Gastrocnemius medialis (tissue), 4 donors: ENCODE measurements at regions of chr1 and their contacts with region 1.

Region 1: DNA sequence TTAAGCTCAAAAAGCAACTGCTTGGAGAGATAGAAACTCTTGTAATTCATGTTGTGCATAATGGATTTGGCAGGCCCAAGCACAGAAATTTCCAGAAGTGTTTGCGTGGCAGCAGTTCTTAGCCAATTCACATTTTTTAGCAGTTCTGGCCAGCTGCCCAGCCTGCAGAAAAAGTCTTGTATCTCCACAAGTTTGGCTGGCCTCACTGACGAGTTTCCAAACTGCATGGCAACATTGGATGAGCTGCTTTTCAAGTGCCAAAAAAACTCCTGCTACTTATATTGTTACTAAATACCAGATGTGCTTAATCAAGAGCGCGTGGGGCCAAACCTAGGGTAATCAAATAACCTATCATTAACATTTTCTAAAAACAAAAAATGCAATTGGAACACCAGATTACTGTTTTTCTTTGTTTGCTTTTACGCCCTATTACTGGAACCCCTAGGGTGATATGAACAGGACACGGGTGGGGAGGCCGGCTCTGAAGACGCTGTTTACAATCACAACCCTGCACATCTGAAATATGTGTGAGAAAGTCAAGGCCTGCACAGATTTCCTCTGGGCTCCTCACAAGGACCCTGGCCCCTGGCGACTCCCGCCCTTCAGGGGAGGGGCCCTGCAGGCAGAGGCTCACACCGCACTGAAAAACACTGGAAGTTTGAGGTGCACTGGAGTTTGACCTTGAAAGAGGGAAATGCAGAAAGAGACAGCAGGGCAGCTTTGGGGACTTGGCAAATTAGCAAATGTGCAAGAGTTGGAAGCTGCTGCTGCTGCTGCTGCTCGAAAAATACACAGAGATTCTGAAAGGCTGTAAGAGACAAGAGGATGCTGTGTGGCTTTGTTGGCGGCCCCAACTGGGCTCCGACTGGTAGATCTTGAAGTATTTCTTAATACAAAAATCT is 55.2 kb upstream of the TARBP1 start:
- DNase-seq: peak; percentile 79 to 89
- ATAC-seq: no peak
- H3K4me3 ChIP-seq: no peak overlapping the region
- H3K27ac ChIP-seq: peak overlapping the region; percentile 93 to 100 (median 98)
- H3K4me1 ChIP-seq: peaks cover 98% of the 10 kb centered on the region in 2 donors
- H3K27me3 ChIP-seq: no peaks in the 10 kb centered on the region
- CTCF ChIP-seq: no peak
- POLR2A ChIP-seq: no peak

Region 2: GRCh38 chr1:234393190-234393589 is 141.0 kb before region 1 on chr1:
- in situ Hi-C with region 1: no loop called
- intact Hi-C with region 1: no loop called
- DNase-seq: no peak
- ATAC-seq: no peak
- H3K4me3 ChIP-seq: no peak overlapping the region
- H3K27ac ChIP-seq: no peak overlapping the region
- H3K4me1 ChIP-seq: peaks cover 2 to 4% of the 10 kb centered on the region in 2 donors
- H3K27me3 ChIP-seq: no peaks in the 10 kb centered on the region
- CTCF ChIP-seq: no peak
- POLR2A ChIP-seq: no peak

Region 3: DNA sequence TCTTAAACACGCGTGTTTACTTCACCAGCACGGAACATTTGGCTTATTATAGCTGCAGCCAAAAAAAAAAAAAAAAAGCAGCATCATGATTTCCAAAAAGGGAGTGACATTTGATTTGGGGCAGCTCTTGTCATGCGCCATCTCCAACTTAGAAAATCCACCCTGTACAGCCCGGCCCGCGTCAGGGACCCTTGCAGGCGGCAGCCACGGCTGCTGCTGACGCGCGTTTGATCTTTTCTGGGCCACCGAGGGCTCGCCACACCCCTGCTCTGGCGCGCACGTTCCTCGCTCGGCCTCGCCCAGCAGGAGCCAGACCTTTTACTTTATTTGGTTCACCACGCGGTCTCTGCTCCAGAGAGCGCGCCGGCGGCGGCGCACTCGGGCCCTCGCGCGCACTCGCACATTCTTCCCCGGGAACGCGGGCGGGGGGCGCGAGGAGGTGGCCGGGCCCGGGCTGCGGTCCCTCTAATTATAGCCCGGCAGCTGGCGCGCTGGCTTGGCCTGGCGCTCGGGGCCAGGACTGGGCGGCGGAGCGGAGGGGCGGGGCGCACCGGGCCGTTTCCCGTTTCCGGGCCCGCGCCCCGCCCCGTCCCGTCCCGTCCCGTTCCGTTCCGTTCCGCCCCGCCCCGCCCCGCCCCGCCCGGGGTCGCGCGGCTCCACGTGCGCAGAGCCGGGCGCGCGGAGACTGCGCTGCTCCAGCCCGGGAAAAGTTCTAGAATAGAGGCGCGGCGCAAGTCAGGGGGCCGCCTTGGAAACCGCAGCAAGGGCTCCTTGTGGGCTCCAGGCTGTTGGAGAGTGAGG is 65.6 kb after region 1 on chr1:
- in situ Hi-C with region 1: loop called in 1 of 4 experiments (anchors 10 kb)
- intact Hi-C with region 1: loop called (anchors 1 kb)
- DNase-seq: peak; percentile 84 to 94
- ATAC-seq: peak; percentile 66 to 69
- H3K4me3 ChIP-seq: peak overlapping the region; percentile 55 to 60 (median 56)
- H3K27ac ChIP-seq: peak overlapping the region; percentile 98
- H3K4me1 ChIP-seq: peaks cover 56 to 57% of the 10 kb centered on the region in 2 donors
- H3K27me3 ChIP-seq: no peaks in the 10 kb centered on the region
- CTCF ChIP-seq: peak in 1 of 5 experiments; percentile 46
- POLR2A ChIP-seq: peak; percentile 76 to 89

Region 4: DNA sequence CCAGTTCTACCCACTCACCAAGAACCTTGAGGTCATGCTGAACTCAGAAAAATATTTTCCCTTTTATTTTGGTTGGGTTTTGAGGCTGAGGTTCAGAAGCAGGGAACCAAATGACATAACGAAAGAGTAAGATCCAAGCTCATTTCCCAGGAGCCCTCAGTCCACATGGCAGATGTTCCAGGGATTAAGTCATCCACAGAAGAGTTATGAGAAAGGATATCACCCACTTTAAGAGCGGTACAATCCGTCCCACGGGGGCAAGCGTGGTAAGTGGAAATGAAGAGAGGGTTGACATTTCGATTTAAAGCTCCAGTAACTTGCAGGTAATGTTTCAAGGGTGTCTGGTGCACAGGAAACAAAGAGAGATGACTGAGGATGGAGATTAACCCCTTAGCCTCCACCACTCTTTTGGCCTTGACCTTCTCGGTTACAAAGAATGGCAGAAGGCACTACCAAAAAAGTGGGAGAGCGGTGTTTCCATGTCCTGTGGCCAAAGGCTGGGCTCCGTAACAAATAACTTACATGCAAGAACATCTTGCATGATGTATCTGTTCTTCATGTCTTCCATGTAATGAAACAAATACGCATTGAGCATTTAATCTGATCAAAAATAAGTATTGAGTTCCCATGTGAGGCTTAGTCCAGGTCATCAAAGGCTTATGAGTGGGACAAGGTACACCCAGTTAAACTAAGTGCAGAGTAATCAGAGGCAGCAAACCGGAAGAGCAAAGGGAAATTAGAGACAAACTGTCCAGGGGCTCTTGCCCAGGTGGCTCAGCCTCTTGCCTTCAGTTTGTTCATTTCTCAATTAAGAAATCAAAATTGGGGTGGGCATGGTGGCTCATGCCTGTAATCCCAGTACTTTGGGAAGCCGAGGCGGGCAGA is 353.0 kb after region 1 on chr1:
- in situ Hi-C with region 1: no loop called
- intact Hi-C with region 1: loop called (anchors 1 kb)
- DNase-seq: peak; percentile 59 to 82
- ATAC-seq: peak; percentile 48 to 57
- H3K4me3 ChIP-seq: peak overlapping the region in 3 of 4 donors; percentile 3 to 42 (median 18)
- H3K27ac ChIP-seq: peak overlapping the region; percentile 90 to 100 (median 96)
- H3K4me1 ChIP-seq: peaks cover 36 to 38% of the 10 kb centered on the region in 2 donors
- H3K27me3 ChIP-seq: no peaks in the 10 kb centered on the region
- CTCF ChIP-seq: no peak
- POLR2A ChIP-seq: peak in 1 of 2 donors; percentile 25

Region 5: GRCh38 chr1:234970731-234971476 is 436.7 kb after region 1 on chr1:
- in situ Hi-C with region 1: no loop called
- intact Hi-C with region 1: loop called (anchors 5 kb)
- DNase-seq: peak; percentile 83 to 93
- ATAC-seq: peak; percentile 84
- H3K4me3 ChIP-seq: peak overlapping the region; percentile 48 to 65 (median 55)
- H3K27ac ChIP-seq: peak overlapping the region; percentile 87 to 94 (median 90)
- H3K4me1 ChIP-seq: peaks cover 58 to 59% of the 10 kb centered on the region in 2 donors
- H3K27me3 ChIP-seq: no peaks in the 10 kb centered on the region
- CTCF ChIP-seq: no peak
- POLR2A ChIP-seq: peak; percentile 56 to 75